Activated T-helper 1 cell treated with anti-CD3 and anti-CD28 coated beads, Interleukin-12 subunit alpha, Interleukin-12 subunit beta, Interleukin-2, Interleukin-4 antibody, amounts not matched to agents 30 ng/mL and 10 ng/mL and 1 ng/mL, durations not matched to agents 14 hours and 24 hours and 36 hours (primary cell): ENCODE measurements at regions of chr7 and their contacts with region 1.

Region 1: DNA sequence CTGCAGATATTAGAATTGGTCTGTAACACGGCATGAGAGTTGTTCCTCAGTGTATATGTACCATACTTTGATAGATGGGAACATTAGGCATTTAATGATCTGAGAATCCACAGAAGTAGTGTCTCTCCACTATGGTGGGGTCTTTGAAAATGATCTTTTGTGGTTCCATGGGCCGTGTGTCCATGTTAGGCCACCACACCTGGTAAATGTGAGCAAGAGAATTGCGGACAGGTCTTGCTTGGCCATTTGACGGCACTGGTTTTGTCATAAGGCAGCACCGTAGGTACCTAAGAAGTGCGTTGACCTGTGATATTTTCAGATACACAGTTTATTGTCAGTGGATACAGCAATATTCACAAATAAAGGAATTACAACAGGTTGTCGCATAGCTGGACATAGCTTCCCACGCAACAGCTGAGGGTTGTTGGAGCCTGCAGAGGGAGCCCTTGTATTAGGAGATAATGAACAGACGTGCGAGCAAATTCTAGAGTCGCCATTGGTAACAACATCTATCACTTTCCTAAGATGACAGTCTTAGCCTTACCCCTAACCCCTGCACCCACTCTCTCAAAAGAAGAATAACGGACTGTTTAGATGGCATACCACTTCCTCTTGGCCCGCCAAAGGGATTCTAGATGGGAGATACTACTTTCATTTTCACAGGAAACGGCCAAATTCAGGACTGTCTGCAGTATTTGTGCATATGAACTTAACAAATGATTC is 111.4 kb downstream of the COL28A1 start:
- DNase-seq: no peak
- H3K4me3 Mint-ChIP-seq: peak overlapping the region; percentile 67
- H3K27ac Mint-ChIP-seq: no peak overlapping the region
- H3K4me1 Mint-ChIP-seq: no peaks in the 10 kb centered on the region
- H3K27me3 Mint-ChIP-seq: peaks cover 4% of the 10 kb centered on the region

Region 2: DNA sequence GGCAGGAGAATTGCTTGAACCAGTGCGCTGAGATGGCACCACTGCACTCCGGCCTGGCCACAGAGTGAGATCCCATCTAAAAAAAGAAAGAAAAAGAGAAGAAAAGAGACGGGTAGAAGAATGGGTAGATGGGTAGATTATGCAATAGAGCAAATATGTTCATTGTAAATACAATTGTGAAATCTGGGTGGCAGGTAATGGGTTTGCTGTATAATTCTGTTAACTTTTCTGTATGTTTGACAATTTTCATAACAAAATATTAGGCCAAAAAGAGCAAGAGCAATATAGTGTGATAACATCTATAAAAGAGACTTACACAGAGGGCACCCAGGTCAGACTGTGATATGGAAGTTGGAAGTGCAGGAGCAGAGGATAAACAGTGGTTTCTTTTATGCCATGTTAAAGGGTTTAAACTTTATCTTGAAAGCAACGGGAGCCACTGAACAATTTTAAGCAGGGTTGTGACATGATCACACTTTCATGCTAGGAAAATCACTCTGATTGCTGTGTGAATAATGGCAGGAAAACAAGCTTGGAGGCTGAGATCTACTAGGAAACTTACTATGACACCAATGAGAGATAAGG is 118.0 kb after region 1 on chr7:
- intact Hi-C with region 1: loop called (anchors 5 kb)
- DNase-seq: no peak
- H3K4me3 Mint-ChIP-seq: no peak overlapping the region
- H3K27ac Mint-ChIP-seq: no peak overlapping the region
- H3K4me1 Mint-ChIP-seq: no peaks in the 10 kb centered on the region
- H3K27me3 Mint-ChIP-seq: peaks cover 8% of the 10 kb centered on the region